Heart right ventricle (tissue), 16 donors: ENCODE measurements at regions of chr18 and their contacts with region 1.

Region 1: GRCh38 chr18:22703883-22704585 is 229.1 kb upstream of the RBBP8 start:
- DNase-seq: peak in 1 of 2 donors; percentile 29
- ATAC-seq: peak in 7 of 8 donors; percentile 67 to 85 (median 78)
- H3K4me3 ChIP-seq: no peak overlapping the region
- H3K27ac ChIP-seq: no peak overlapping the region
- H3K4me1 ChIP-seq: peaks cover 0 to 28% (median 3%) of the 10 kb centered on the region in 9 donors
- H3K27me3 ChIP-seq: no peaks in the 10 kb centered on the region
- CTCF ChIP-seq: peak; percentile 71 to 91 (median 85)

Region 2: GRCh38 chr18:21897811-21898210 is 806.2 kb before region 1 on chr18:
- intact Hi-C with region 1: loop called in 1 of 10 experiments (anchors 10 kb)
- DNase-seq: peak in 1 of 2 donors; percentile 47
- ATAC-seq: peak; percentile 56 to 81 (median 68)
- H3K4me3 ChIP-seq: no peak overlapping the region
- H3K27ac ChIP-seq: no peak overlapping the region
- H3K4me1 ChIP-seq: peaks cover 0 to 15% (median 0%) of the 10 kb centered on the region in 9 donors
- H3K27me3 ChIP-seq: no peaks in the 10 kb centered on the region
- CTCF ChIP-seq: peak; percentile 36 to 79 (median 68)

Region 3: DNA sequence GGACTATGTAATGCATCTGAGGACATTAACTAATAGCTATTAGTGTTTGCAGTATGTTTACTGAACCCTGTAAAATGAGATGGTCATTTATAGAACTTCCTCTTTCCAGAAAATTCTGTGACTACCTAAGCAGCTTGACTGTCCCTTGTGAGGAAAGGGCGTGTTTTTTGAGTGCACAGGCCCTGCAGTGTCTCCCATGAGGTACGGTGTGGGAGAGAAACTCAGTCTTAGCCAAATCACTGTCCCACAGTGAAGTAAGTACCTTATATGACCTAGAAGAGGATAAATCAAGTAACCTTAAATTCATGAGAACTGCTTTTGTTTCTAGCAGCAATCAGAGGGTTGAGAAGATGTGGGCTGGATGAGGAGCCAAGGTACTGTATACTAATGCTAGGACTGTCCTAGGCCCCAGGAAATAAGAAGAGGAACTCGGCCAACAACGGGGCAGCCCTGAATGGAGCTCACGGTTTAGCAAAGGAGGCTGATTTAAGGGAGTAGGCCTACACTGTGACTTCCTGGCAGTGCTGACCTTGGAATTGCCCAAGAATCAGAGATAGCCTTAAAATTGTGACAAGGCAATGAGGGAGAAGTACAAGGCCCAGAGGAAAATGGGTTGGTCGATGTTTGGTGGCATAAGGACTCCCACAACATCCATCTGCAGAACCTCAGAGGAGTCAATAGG is 182.9 kb before region 1 on chr18:
- intact Hi-C with region 1: no loop called
- DNase-seq: no peak
- ATAC-seq: peak; percentile 62 to 83 (median 74)
- H3K4me3 ChIP-seq: no peak overlapping the region
- H3K27ac ChIP-seq: peak overlapping the region in 8 of 10 donors; percentile 14 to 86 (median 66)
- H3K4me1 ChIP-seq: peaks cover 0 to 42% (median 18%) of the 10 kb centered on the region in 9 donors
- H3K27me3 ChIP-seq: no peaks in the 10 kb centered on the region
- CTCF ChIP-seq: no peak

Region 4: GRCh38 chr18:22570492-22570891 is 133.5 kb before region 1 on chr18:
- intact Hi-C with region 1: loop called in 5 of 10 experiments (anchors 5 to 10 kb)
- DNase-seq: no peak
- ATAC-seq: no peak
- H3K4me3 ChIP-seq: no peak overlapping the region
- H3K27ac ChIP-seq: no peak overlapping the region
- H3K4me1 ChIP-seq: peaks cover 0 to 10% (median 0%) of the 10 kb centered on the region in 9 donors
- H3K27me3 ChIP-seq: no peaks in the 10 kb centered on the region
- CTCF ChIP-seq: no peak

Region 5: DNA sequence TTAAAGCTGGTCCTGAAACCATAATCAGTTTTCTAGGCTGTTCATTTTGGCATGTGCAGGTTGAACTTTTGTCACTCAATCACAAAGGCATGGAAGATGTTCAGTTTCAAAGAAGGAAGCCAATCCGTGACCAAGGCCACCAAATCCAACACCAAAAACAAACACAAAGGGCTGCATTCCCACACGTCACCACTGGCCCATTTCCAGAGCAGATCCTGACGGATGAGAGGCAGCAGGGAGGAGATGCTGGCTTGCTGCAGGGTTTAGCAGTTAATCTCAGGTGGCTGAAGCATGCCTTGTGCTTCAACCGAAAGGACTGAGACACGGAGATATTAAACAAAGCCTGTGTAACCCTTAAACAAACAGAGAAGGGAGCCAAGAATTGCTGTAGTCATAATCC is 94.4 kb before region 1 on chr18:
- intact Hi-C with region 1: loop called in 4 of 10 experiments (anchors 10 kb)
- DNase-seq: peak; percentile 66 to 86
- ATAC-seq: peak; percentile 47 to 84 (median 63)
- H3K4me3 ChIP-seq: no peak overlapping the region
- H3K27ac ChIP-seq: peak overlapping the region in 9 of 10 donors; percentile 1 to 79 (median 57)
- H3K4me1 ChIP-seq: peaks cover 0 to 60% (median 29%) of the 10 kb centered on the region in 9 donors
- H3K27me3 ChIP-seq: no peaks in the 10 kb centered on the region
- CTCF ChIP-seq: no peak

Region 6: GRCh38 chr18:22765896-22766295 is 61.9 kb after region 1 on chr18:
- intact Hi-C with region 1: no loop called
- DNase-seq: peak in 1 of 2 donors; percentile 29
- ATAC-seq: peak; percentile 38 to 97 (median 86)
- H3K4me3 ChIP-seq: no peak overlapping the region
- H3K27ac ChIP-seq: peak overlapping the region in 9 of 10 donors; percentile 16 to 68 (median 30)
- H3K4me1 ChIP-seq: peaks cover 0 to 18% (median 0%) of the 10 kb centered on the region in 9 donors
- H3K27me3 ChIP-seq: no peaks in the 10 kb centered on the region
- CTCF ChIP-seq: no peak

Region 7: DNA sequence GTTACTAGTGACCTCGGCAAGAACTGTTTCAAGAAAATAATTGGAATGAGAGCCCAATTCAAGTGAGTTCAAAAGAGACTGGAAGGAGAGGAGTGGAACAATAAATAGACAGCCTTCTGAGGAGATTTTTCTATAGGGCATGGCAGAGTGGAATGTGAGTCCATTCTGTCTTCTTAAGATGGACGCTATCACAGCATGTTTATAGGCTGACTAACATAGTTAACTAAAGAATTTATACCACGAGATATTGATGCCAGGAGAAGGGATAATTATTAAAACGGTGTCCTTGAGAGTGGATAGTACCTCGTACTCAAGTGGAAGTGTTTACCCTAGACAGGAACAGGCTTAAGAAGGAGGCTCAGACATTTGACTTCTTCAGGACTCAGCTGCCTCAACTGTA is 85.6 kb after region 1 on chr18:
- intact Hi-C with region 1: no loop called
- DNase-seq: no peak
- ATAC-seq: no peak
- H3K4me3 ChIP-seq: no peak overlapping the region
- H3K27ac ChIP-seq: no peak overlapping the region
- H3K4me1 ChIP-seq: no peaks in the 10 kb centered on the region
- H3K27me3 ChIP-seq: no peaks in the 10 kb centered on the region
- CTCF ChIP-seq: no peak